ENCODE measurements at regions of chr22 and their contacts with region 1.

Region 1: DNA sequence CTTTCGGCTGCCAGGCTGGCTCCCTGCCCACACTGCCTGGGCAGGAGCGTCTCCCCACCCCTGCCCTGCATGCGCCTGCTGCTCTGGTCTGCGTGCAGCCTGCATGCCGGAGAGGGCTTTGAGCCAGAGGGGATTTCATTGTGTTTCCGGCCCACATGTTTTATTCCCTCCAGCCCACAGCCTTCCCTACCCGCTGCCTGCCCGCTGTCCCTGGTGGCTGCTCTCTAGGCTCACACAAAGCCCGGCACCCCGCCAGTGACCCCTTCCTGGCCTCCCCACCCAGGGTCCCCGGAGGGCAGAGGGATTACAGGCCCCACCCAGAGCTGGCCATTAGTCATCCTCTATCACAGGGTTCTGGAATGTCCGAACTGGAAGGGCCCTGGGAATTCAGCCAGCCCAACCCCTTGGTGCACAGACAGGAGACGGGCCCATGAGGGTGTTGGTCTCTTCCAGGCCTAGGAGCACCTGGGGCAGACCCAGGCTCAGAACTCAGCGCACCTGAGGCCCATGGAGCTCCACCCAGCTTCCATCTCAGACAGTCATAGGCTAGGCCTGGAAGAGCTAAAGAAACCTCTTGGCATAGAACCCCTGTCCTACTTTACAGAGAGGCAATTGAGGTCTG is 55.2 kb upstream of the GCAT start:
- DNase-seq: peak; percentile 90
- H3K4me3 ChIP-seq: no peak overlapping the region
- H3K27ac ChIP-seq: peak overlapping the region; percentile 61
- H3K4me1 ChIP-seq: peaks cover 62% of the 10 kb centered on the region
- H3K27me3 ChIP-seq: no peaks in the 10 kb centered on the region
- CTCF ChIP-seq: peak; percentile 14 to 29
- POLR2A ChIP-seq: no peak

Region 2: GRCh38 chr22:37525073-37525748 is 227.4 kb before region 1 on chr22:
- CTCF ChIA-PET with region 1: no interaction called
- POLR2A ChIA-PET with region 1: no interaction called
- dilution Hi-C with region 1: no loop called
- intact Hi-C with region 1: no loop called
- DNase-seq: peak; percentile 76
- H3K4me3 ChIP-seq: peak overlapping the region in 1 of 3 experiments; percentile 0
- H3K27ac ChIP-seq: peak overlapping the region; percentile 49
- H3K4me1 ChIP-seq: peaks cover 13% of the 10 kb centered on the region
- H3K27me3 ChIP-seq: no peaks in the 10 kb centered on the region
- CTCF ChIP-seq: no peak
- POLR2A ChIP-seq: peak; percentile 55

Region 3: GRCh38 chr22:37561212-37562048 is 191.1 kb before region 1 on chr22:
- CTCF ChIA-PET with region 1: no interaction called
- POLR2A ChIA-PET with region 1: no interaction called
- dilution Hi-C with region 1: no loop called
- intact Hi-C with region 1: loop called (anchors 5 kb)
- DNase-seq: peak; percentile 88
- H3K4me3 ChIP-seq: peak overlapping the region; percentile 71 to 86 (median 74)
- H3K27ac ChIP-seq: peak overlapping the region; percentile 99
- H3K4me1 ChIP-seq: peaks cover 61% of the 10 kb centered on the region
- H3K27me3 ChIP-seq: no peaks in the 10 kb centered on the region
- CTCF ChIP-seq: peak; percentile 94
- POLR2A ChIP-seq: peak; percentile 47

Region 4: DNA sequence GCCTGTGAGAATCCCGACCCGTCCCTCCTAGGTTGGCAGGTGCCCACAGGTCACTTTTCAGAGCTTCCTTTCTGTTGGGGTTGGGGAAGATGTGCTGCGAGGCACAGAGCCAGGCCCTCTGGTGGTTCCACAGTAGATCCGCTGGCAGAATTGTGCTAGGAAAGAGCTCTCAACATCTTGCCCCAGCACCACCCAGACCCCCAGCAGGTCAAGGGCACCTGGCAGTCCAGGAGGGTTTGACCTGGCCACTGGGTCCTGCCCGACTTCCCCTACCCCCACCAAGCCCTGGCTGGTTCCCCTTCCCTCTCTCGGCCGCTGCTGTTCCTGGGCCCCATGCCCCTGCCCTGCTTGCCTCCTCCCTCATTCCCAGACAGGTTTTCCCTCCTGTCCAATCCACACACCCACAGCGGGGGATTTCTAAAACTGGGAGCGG is 28.9 kb after region 1 on chr22:
- CTCF ChIA-PET with region 1: interaction called, 11 read pairs
- POLR2A ChIA-PET with region 1: no interaction called
- dilution Hi-C with region 1: no loop called
- intact Hi-C with region 1: no loop called
- DNase-seq: no peak
- H3K4me3 ChIP-seq: no peak overlapping the region
- H3K27ac ChIP-seq: no peak overlapping the region
- H3K4me1 ChIP-seq: peaks cover 15% of the 10 kb centered on the region
- H3K27me3 ChIP-seq: no peaks in the 10 kb centered on the region
- CTCF ChIP-seq: peak; percentile 21 to 41
- POLR2A ChIP-seq: no peak

Region 5: DNA sequence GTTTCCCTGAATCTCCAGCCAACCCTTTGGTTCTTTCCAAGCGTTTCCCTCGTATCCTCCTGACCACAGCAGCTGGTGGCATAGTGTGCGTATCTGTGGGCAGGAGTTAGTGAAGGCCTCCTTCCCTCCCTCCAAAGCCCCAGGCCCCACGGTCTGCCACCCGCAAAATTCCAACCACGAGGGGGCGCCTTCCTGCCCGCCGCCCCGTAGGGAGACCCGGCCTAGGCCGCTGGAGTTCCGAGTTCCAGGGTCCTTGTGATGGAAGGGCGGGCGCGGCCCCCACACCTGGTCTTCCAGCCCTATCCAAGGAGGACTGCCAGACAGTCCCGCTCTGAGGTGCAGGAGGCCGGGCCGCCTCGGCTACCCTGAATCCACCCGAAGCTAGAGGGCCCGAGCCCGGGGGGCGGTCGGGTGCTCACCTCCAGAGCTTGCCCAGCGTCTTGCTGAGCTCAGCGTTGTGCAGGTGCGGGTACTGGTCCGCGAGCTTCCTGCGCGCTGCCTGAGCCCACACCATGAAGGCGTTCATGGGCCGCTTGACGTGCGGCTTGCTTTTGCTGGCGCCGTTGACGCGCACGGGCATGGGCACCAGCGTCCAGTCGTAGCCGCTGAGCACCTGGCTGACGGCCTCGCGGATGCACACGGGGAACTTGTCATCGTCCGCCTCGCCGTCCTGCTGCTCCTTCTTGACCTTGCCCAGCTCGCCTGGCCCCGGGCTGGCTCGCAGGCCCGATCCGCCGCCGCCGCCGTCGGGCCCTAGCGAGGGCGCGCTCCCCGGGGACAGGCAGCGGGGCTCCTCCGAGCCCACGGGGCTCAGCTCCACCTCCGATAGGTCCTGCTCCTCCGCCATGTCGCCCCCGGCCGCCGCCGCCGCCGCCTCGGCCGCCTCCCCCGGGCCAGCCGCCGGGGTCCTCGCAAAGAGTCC is 230.6 kb after region 1 on chr22:
- CTCF ChIA-PET with region 1: no interaction called
- POLR2A ChIA-PET with region 1: no interaction called
- dilution Hi-C with region 1: no loop called
- intact Hi-C with region 1: no loop called
- DNase-seq: no peak
- H3K4me3 ChIP-seq: no peak overlapping the region
- H3K27ac ChIP-seq: no peak overlapping the region
- H3K4me1 ChIP-seq: no peaks in the 10 kb centered on the region
- H3K27me3 ChIP-seq: no peaks in the 10 kb centered on the region
- CTCF ChIP-seq: peak; percentile 32 to 37
- POLR2A ChIP-seq: no peak